T-cell (primary cell): ENCODE measurements at regions of chr1 and their contacts with region 1.

Region 1: DNA sequence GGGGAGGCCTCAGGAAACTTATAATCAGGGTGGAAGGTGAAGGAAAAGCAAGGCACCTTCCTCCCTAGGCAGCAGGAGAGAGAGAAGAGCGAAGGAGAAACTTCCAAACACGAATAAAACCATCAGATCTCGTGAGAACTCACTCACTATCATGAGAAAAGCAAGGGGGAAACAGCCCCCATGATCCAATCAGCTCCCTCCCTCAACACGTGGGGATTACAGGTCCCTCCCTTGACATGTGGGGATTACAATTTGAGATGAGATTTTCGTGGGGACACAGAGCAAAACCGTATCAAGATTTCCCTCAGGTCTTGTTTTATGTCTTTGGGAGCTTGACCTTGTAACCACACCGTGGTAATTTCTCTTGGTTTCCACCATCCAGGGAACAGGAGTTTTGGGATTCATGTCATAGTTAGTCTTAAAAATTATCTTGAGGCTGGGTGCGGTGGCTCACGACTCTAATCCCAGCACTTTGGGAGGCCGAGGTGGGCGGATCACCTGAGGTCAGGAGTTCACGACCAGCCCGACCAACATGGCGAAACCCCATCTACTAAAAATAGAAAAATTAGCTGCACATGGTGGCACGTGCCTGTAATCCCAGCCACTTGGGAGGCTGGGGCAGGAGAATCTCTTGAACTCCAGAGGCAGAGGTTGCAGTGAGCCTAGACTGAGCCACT is 47.2 kb upstream of the NBPF3 start:
- DNase-seq: no peak
- ATAC-seq: no peak
- H3K4me3 ChIP-seq: no peak overlapping the region
- H3K4me3 Mint-ChIP-seq: no peak overlapping the region
- H3K27ac ChIP-seq: no peak overlapping the region
- H3K27ac Mint-ChIP-seq: no peak overlapping the region
- H3K4me1 ChIP-seq: peaks cover 0 to 2% of the 10 kb centered on the region in 2 experiments
- H3K4me1 Mint-ChIP-seq: peaks cover 2 to 4% (median 2%) of the 10 kb centered on the region in 3 donors
- H3K27me3 ChIP-seq: peaks cover 0 to 6% of the 10 kb centered on the region in 2 experiments
- H3K27me3 Mint-ChIP-seq: peaks cover 1 to 8% of the 10 kb centered on the region in 2 donors

Region 2: GRCh38 chr1:21301794-21302440 is 90.8 kb before region 1 on chr1:
- CTCF ChIA-PET with region 1: no interaction called
- POLR2A ChIA-PET with region 1: interaction called in 1 of 2 experiments, 10 read pairs
- DNase-seq: no peak
- ATAC-seq: no peak
- H3K4me3 ChIP-seq: no peak overlapping the region
- H3K4me3 Mint-ChIP-seq: no peak overlapping the region
- H3K27ac ChIP-seq: no peak overlapping the region
- H3K27ac Mint-ChIP-seq: peak overlapping the region; percentile 25 to 72
- H3K4me1 ChIP-seq: peaks cover 12 to 64% of the 10 kb centered on the region in 2 experiments
- H3K4me1 Mint-ChIP-seq: peaks cover 70 to 80% (median 74%) of the 10 kb centered on the region in 3 donors
- H3K27me3 ChIP-seq: no peaks in the 10 kb centered on the region
- H3K27me3 Mint-ChIP-seq: no peaks in the 10 kb centered on the region